ENCODE measurements at regions of chr16 and their contacts with region 1.

Region 1: GRCh38 chr16:57013902-57014301 is 24.5 kb downstream of the NLRC5 start:
- DNase-seq: peak in 1 of 2 donors; percentile 44
- ATAC-seq: no peak
- H3K4me3 ChIP-seq: no peak overlapping the region
- H3K4me3 Mint-ChIP-seq: peak overlapping the region; percentile 85
- H3K27ac ChIP-seq: peak overlapping the region; percentile 96
- H3K27ac Mint-ChIP-seq: peak overlapping the region; percentile 92 to 100
- H3K4me1 ChIP-seq: peaks cover 57% of the 10 kb centered on the region
- H3K4me1 Mint-ChIP-seq: peaks cover 58 to 61% of the 10 kb centered on the region in 2 donors
- H3K27me3 ChIP-seq: no peaks in the 10 kb centered on the region
- H3K27me3 Mint-ChIP-seq: no peaks in the 10 kb centered on the region
- CTCF ChIP-seq: no peak

Region 2: DNA sequence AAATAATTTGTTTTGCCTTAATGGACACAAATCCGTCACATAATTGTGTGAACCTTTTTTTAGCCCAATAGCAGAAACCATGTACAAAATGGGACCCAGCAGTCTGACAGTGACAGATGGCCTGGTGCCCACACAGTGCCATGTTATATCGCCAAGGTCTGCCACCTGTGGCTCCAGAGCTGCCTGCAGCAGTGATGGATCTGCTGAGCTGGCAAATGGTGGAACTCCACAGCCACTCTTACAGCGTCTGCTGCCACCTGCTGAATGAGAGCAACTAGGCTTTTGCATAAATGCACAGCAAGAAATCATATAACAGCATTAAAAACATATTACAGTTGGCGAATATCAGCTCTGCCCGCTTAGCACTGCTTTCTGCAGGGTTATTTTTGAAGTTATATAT is 224.5 kb before region 1 on chr16:
- intact Hi-C with region 1: no loop called
- DNase-seq: peak in 1 of 2 donors; percentile 44
- ATAC-seq: no peak
- H3K4me3 ChIP-seq: no peak overlapping the region
- H3K4me3 Mint-ChIP-seq: no peak overlapping the region
- H3K27ac ChIP-seq: no peak overlapping the region
- H3K27ac Mint-ChIP-seq: no peak overlapping the region
- H3K4me1 ChIP-seq: no peaks in the 10 kb centered on the region
- H3K4me1 Mint-ChIP-seq: peaks cover 6 to 11% of the 10 kb centered on the region in 2 donors
- H3K27me3 ChIP-seq: no peaks in the 10 kb centered on the region
- H3K27me3 Mint-ChIP-seq: no peaks in the 10 kb centered on the region
- CTCF ChIP-seq: no peak

Region 3: GRCh38 chr16:56964243-56965148 is 49.4 kb before region 1 on chr16:
- intact Hi-C with region 1: no loop called
- DNase-seq: peak; percentile 94 to 97
- ATAC-seq: peak; percentile 98 to 99 (median 98)
- H3K4me3 ChIP-seq: no peak overlapping the region
- H3K4me3 Mint-ChIP-seq: no peak overlapping the region
- H3K27ac ChIP-seq: no peak overlapping the region
- H3K27ac Mint-ChIP-seq: peak overlapping the region; percentile 50 to 66
- H3K4me1 ChIP-seq: peaks cover 18% of the 10 kb centered on the region
- H3K4me1 Mint-ChIP-seq: peaks cover 12 to 18% of the 10 kb centered on the region in 2 donors
- H3K27me3 ChIP-seq: no peaks in the 10 kb centered on the region
- H3K27me3 Mint-ChIP-seq: no peaks in the 10 kb centered on the region
- CTCF ChIP-seq: peak; percentile 100

Region 4: GRCh38 chr16:56988948-56989945 is 24.7 kb before region 1 on chr16 and contains the start of gene NLRC5:
- intact Hi-C with region 1: loop called (anchors 1 kb)
- DNase-seq: peak; percentile 83 to 94
- ATAC-seq: peak; percentile 94 to 96 (median 96)
- H3K4me3 ChIP-seq: peak within 1 kb of the TSS; percentile 89
- H3K4me3 Mint-ChIP-seq: peak within 1 kb of the TSS; percentile 89
- H3K27ac ChIP-seq: peak within 1 kb of the TSS; percentile 79
- H3K27ac Mint-ChIP-seq: peak within 1 kb of the TSS; percentile 91 to 99
- H3K4me1 ChIP-seq: peaks cover 70% of the 10 kb centered on the region
- H3K4me1 Mint-ChIP-seq: peaks cover 64 to 68% of the 10 kb centered on the region in 2 donors
- H3K27me3 ChIP-seq: no peaks in the 10 kb centered on the region
- H3K27me3 Mint-ChIP-seq: no peaks in the 10 kb centered on the region
- CTCF ChIP-seq: no peak
- total RNA-seq, gene NLRC5: 320 to 563 (median 535) TPM

Region 5: GRCh38 chr16:57000271-57001025 is 13.5 kb before region 1 on chr16:
- intact Hi-C with region 1: loop called (anchors 2 kb)
- DNase-seq: peak; percentile 40 to 44
- ATAC-seq: peak; percentile 49 to 85 (median 75)
- H3K4me3 ChIP-seq: no peak overlapping the region
- H3K4me3 Mint-ChIP-seq: peak overlapping the region; percentile 52
- H3K27ac ChIP-seq: peak overlapping the region; percentile 72
- H3K27ac Mint-ChIP-seq: peak overlapping the region; percentile 92 to 95
- H3K4me1 ChIP-seq: peaks cover 84% of the 10 kb centered on the region
- H3K4me1 Mint-ChIP-seq: peaks cover 68 to 77% of the 10 kb centered on the region in 2 donors
- H3K27me3 ChIP-seq: no peaks in the 10 kb centered on the region
- H3K27me3 Mint-ChIP-seq: no peaks in the 10 kb centered on the region
- CTCF ChIP-seq: no peak

Region 6: GRCh38 chr16:57071831-57072582 is 58.1 kb after region 1 on chr16:
- intact Hi-C with region 1: loop called (anchors 2 kb)
- DNase-seq: peak in 1 of 2 donors; percentile 46
- ATAC-seq: peak; percentile 30 to 54 (median 52)
- H3K4me3 ChIP-seq: no peak overlapping the region
- H3K4me3 Mint-ChIP-seq: peak overlapping the region; percentile 66
- H3K27ac ChIP-seq: peak overlapping the region; percentile 70
- H3K27ac Mint-ChIP-seq: peak overlapping the region; percentile 83 to 88
- H3K4me1 ChIP-seq: peaks cover 15% of the 10 kb centered on the region
- H3K4me1 Mint-ChIP-seq: peaks cover 36 to 39% of the 10 kb centered on the region in 2 donors
- H3K27me3 ChIP-seq: no peaks in the 10 kb centered on the region
- H3K27me3 Mint-ChIP-seq: no peaks in the 10 kb centered on the region
- CTCF ChIP-seq: no peak

Measured in natural killer cell (primary cell).